Left cardiac atrium (tissue), 4 donors: ENCODE measurements at regions of chr20 and their contacts with region 1.

Region 1: GRCh38 chr20:34069341-34070078 is 42.5 kb downstream of the EIF2S2 start:
- DNase-seq: peak; percentile 76
- ATAC-seq: peak; percentile 87 to 88

Region 2: DNA sequence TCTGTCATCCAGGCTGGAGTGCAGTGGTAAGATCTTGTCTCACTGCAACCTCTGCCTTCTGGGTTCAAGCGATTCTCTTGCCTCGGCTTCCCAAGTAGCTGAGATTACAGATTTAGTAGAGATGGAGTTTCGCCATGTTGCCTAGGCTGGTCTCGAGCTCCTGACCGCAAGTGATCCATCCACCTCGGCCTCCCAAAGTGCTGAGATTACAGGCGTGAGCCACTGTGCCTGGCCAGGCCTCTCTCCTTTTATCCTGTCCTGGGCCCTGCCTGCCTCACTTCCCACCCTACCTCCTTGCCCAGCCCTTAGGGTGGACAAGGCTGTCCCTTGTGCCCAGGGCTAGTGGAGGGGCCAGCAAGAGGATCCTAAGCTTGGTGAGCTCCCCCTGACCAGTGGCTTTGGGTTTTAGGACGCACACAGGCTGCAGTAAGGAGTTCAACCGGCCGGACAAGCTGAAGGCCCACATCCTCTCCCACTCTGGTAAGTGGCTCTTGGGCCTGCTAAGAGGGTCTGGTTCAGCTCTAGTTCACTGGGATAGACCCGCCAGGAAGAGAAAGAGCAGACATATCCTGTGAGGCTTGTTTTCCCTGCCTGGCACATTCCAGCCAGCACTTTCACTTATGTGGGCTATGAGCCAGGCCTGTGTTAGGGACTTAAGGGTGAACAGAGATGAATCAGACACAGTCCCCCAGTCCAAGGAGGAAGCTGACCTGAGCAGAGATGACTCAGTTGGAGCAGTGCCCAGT is 280.2 kb before region 1 on chr20:
- intact Hi-C with region 1: loop called in 1 of 2 experiments (anchors 10 kb)
- DNase-seq: peak; percentile 70
- ATAC-seq: peak; percentile 72 to 88

Region 3: DNA sequence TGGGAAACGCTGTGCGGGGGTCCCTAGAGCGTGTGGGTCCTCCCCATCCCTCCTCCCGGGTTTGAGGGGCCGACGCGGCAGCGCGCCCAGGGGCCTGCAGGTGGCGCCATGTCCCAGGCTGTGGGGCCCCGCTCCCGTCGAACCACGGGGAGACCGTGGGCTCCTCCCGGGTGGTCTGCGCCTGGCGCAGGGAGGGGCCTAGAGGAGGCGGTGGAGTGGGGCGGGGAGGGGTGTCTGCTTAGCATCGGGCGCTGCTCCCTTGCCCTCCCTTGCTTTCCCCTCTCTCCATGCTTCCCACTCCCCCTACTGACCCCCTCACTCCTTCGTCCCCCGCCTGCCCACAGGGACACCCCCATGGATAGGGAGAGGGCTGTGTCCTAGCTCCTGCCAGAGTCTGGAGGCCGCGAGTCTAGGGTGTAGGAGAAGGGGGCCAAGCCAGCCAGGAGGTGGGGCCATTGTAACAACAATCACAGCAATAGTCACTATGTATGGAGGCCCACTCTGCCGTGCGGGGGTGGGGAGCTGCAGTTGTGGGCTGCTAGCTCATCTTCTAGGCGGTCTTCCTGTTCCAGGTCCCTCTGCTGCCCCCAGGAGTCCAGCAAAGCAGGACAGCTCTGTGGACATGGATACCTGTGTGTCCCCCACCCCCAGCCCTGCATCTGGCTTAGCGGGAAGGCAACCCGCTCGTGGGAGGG is 206.7 kb before region 1 on chr20:
- intact Hi-C with region 1: loop called (anchors 1 to 5 kb)
- DNase-seq: peak; percentile 67
- ATAC-seq: peak; percentile 75 to 89

Region 4: GRCh38 chr20:33933469-33933909 is 136.0 kb before region 1 on chr20:
- intact Hi-C with region 1: loop called (anchors 2 to 10 kb)
- DNase-seq: peak; percentile 59
- ATAC-seq: peak; percentile 87 to 97

Region 5: GRCh38 chr20:33963751-33964150 is 105.8 kb before region 1 on chr20:
- intact Hi-C with region 1: no loop called
- DNase-seq: no peak
- ATAC-seq: no peak

Region 6: GRCh38 chr20:33992923-33993575 is 76.5 kb before region 1 on chr20:
- intact Hi-C with region 1: loop called in 1 of 2 experiments (anchors 10 kb)
- DNase-seq: peak; percentile 99
- ATAC-seq: peak; percentile 91 to 95

Region 7: DNA sequence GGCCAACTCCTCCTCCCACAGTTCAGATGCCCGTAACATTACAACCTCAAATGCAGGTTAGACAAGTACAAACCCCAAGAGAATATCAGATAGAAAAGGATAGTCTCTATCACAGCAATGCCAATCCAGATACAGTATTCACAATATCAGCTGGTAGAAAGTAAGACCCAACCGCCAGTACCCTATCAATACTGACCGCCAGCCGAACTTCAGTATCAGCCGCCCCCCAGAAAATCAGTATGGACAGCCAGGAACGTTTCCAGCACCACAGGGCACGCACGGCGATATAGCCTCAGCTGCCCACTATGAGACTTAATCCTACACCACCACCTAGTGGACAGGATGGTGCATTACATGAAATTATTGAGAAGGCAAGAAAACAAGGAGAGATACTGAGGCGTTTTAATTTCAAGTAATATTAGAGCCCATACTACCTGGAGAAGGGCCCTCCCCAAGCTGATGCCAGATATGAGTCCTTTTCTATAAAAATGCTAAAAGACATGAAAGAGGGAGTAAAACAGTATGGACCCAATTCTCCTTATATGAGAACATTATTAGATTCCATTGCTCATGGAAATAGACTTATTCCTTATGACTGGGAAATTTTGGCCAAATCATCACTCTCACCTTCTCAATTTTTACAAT is 60.1 kb after region 1 on chr20:
- intact Hi-C with region 1: no loop called
- DNase-seq: peak; percentile 60
- ATAC-seq: peak; percentile 84 to 90